ENCODE measurements at regions of chr5 and their contacts with region 1.

Region 1: GRCh38 chr5:116557669-116558271 is 16.9 kb downstream of the SEMA6A start:
- DNase-seq: peak; percentile 52
- H3K4me3 ChIP-seq: no peak overlapping the region
- H3K27ac ChIP-seq: no peak overlapping the region
- H3K4me1 ChIP-seq: no peaks in the 10 kb centered on the region
- H3K27me3 ChIP-seq: no peaks in the 10 kb centered on the region
- CTCF ChIP-seq: peak; percentile 77

Region 2: DNA sequence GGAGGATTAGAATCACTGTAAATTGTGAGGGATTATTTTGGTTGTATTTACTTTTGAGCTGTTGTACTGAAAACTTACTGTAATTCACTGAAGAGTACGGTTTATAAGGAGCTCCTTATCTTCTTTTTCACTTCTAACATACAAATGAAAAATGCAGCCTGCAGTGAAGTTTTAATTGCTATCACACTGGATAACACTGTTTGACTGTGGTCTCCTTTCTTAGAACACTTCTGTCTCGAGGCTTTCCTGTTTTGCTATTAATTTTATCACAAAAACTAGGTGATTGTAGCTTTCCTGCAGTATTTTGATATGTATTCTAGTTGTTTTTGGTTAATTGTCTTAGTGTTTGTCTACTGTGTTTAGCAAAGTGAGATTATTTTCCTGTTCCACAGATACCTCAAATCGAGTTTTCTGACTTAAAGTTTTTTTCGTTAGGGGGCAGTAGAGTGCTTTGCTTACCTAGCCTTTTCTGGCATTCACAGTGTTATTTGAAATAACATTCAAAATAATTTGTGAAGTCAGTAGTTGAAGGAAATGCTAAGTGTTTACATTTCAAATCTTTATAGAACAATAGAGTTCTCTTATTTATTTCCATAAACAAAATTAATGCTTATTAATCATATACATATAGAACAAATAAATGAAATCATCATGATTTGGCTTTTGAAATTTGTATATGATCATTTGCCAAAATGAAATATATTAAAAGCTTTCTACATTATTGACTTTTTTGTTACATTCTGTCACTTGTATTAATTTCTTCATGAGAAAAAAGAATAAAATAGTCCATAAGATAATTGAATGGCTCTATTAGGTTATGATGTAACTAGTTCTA is 420.0 kb before region 1 on chr5:
- CTCF ChIA-PET with region 1: no interaction called
- POLR2A ChIA-PET with region 1: no interaction called
- intact Hi-C with region 1: loop called (anchors 5 kb)
- DNase-seq: peak; percentile 70
- H3K4me3 ChIP-seq: no peak overlapping the region
- H3K27ac ChIP-seq: no peak overlapping the region
- H3K4me1 ChIP-seq: no peaks in the 10 kb centered on the region
- H3K27me3 ChIP-seq: no peaks in the 10 kb centered on the region
- CTCF ChIP-seq: peak; percentile 79